ENCODE measurements at regions of chr13 and their contacts with region 1.

Region 1: DNA sequence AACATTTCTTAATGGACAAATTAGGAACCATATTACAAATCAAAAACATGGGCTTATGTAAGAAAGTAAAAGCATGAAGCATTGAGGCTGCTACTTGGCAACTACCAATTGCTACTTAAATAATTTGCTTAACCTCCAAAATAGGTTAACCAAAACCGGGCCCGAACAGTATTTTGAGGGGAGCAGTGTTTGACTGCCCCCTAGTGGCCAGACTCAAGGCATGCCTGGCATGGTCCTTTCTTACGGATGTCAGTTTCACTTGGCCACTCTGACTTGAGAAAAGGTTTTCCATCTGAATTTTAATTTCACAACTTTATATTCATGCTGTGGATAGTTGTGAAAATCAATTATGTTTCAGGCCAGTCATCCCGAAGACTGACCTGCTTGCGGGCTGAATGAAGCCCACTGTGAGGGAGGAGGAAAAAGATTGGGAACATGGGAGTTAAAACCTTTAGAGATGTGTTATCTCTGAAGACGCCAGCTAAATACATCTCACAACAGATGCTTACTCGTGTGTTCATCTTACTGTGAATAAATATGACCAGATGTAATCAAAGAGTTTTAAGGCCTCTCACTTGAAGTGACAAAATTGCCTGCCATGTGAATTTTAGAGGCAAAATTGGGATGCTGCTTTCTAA is 2.9 kb downstream of the RXFP2 start:
- DNase-seq: peak; percentile 55
- H3K4me3 ChIP-seq: no peak overlapping the region
- H3K27ac ChIP-seq: no peak overlapping the region
- H3K4me1 ChIP-seq: no peaks in the 10 kb centered on the region
- H3K27me3 ChIP-seq: peaks cover 6% of the 10 kb centered on the region
- CTCF ChIP-seq: peak; percentile 85 to 99 (median 97)
- EP300 ChIP-seq: no peak
- POLR2A ChIP-seq: no peak

Region 2: GRCh38 chr13:30792285-30793000 is 949.8 kb before region 1 on chr13:
- in situ Hi-C with region 1: no loop called
- intact Hi-C with region 1: no loop called
- DNase-seq: peak; percentile 50
- H3K4me3 ChIP-seq: no peak overlapping the region
- H3K27ac ChIP-seq: peak overlapping the region; percentile 17 to 54 (median 43)
- H3K4me1 ChIP-seq: peaks cover 0 to 27% (median 8%) of the 10 kb centered on the region in 4 donors
- H3K27me3 ChIP-seq: no peaks in the 10 kb centered on the region
- CTCF ChIP-seq: peak in 2 of 5 experiments; percentile 9 to 13
- EP300 ChIP-seq: no peak
- POLR2A ChIP-seq: no peak

Region 3: GRCh38 chr13:31236211-31236786 is 505.9 kb before region 1 on chr13:
- in situ Hi-C with region 1: loop called (anchors 10 to 25 kb)
- intact Hi-C with region 1: no loop called
- DNase-seq: no peak
- H3K4me3 ChIP-seq: no peak overlapping the region
- H3K27ac ChIP-seq: no peak overlapping the region
- H3K4me1 ChIP-seq: no peaks in the 10 kb centered on the region
- H3K27me3 ChIP-seq: no peaks in the 10 kb centered on the region
- CTCF ChIP-seq: peak; percentile 60 to 76 (median 64)
- EP300 ChIP-seq: no peak
- POLR2A ChIP-seq: no peak

Region 4: DNA sequence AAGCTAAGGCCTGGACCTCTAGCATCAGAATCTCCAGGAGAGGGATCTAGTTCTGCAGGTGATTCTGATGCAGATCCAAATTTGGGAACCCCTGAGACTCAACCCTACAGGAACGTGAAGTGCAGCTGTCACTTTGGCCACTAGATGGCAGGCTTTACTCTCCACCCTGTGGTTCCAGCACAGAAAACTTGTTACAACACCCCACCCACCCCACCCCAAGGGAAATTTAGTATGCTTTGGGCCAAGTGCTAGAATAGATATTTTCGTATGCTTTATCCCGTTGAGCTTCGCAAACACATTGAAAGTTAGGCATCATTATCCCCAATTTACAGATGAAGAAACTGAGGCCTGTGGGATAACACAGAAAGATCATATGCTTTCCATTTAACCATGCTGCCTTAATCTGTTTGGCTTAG is 310.5 kb before region 1 on chr13:
- in situ Hi-C with region 1: loop called (anchors 5 to 25 kb)
- intact Hi-C with region 1: loop called (anchors 5 kb)
- DNase-seq: peak; percentile 52
- H3K4me3 ChIP-seq: no peak overlapping the region
- H3K27ac ChIP-seq: no peak overlapping the region
- H3K4me1 ChIP-seq: no peaks in the 10 kb centered on the region
- H3K27me3 ChIP-seq: no peaks in the 10 kb centered on the region
- CTCF ChIP-seq: peak; percentile 32 to 87 (median 79)
- EP300 ChIP-seq: no peak
- POLR2A ChIP-seq: no peak

Region 5: DNA sequence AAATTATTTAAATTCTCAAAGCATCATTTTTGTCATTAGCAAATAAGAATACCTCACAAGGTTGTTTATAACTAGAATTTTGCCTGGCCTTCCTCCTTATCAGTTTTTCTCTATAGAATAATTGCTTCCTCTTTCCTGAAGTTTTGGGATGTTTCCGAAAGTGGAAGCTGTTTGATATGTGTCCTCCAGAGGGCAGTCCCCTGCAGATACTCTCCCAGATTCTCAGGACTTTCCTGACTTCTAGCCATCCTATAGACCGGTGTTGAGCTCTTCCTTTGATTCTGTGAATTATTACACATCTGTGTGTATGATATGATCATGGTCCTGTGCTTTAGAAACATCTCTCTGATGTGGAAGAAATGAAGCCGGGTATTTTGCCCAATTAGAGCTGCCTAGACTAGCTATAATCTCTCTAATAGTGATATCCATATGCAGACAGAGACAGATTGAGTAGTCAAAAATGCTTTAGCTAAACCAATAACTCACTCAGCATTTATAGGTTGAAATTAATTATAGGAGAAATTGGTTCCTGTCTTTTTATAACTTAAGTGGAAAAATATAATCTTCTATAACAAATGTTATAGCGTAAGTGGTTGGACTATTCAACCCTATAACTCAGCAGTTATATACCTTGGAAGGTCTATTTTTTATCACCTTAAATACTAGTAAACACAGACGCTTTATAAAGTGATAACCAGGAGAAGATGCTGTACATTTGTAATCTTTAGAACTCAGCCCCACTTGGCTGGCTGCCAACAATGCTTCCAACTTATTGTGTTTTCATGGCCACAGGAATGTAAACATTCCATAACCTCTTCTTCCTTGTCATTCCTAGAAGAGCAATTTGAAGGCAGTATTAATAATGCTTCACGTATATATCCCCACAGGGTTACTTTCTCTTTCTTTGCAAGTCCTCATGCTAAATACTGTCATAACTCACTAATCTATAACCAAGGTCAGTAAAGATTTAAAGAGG is 203.9 kb before region 1 on chr13:
- in situ Hi-C with region 1: loop called in 2 of 4 experiments (anchors 25 kb)
- intact Hi-C with region 1: no loop called
- DNase-seq: peak; percentile 13
- H3K4me3 ChIP-seq: no peak overlapping the region
- H3K27ac ChIP-seq: no peak overlapping the region
- H3K4me1 ChIP-seq: no peaks in the 10 kb centered on the region
- H3K27me3 ChIP-seq: no peaks in the 10 kb centered on the region
- CTCF ChIP-seq: peak; percentile 38 to 57 (median 46)
- EP300 ChIP-seq: no peak
- POLR2A ChIP-seq: no peak

Measured in transverse colon (tissue), 4 donors.